Heart left ventricle (tissue), 16 donors: ENCODE measurements at regions of chr5 and their contacts with region 1.

Region 1: DNA sequence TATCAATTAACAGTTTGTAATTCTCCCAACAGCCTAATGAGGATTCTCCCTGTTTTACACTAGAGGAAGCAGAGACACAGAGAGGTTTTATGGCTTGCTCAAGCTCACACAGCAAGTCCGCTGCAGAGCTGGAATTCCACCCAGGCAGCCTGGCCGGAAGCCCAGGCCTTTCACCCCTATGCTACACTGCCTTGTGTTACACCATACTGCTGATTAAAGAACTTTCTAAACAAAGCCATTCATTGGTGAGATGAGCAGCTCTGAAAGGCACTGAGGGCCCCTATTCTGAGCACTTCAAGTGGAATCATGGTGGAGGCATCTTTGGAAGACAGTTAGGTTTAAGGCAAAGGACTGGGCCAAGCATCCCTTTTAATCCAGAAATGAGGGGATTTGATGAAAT is 14.7 kb upstream of the LARP1 start:
- DNase-seq: peak; percentile 43 to 79 (median 68)
- ATAC-seq: peak; percentile 52 to 93 (median 90)
- H3K4me3 ChIP-seq: no peak overlapping the region
- H3K27ac ChIP-seq: peak overlapping the region in 7 of 12 donors; percentile 9 to 68 (median 41)
- H3K4me1 ChIP-seq: peaks cover 0 to 15% (median 10%) of the 10 kb centered on the region in 12 donors
- H3K27me3 ChIP-seq: no peaks in the 10 kb centered on the region
- CTCF ChIP-seq: no peak
- POLR2A ChIP-seq: no peak

Region 2: GRCh38 chr5:154683101-154683880 is 57.2 kb before region 1 on chr5:
- intact Hi-C with region 1: loop called in 1 of 10 experiments (anchors 10 kb)
- DNase-seq: no peak
- ATAC-seq: no peak
- H3K4me3 ChIP-seq: peak overlapping the region; percentile 23 to 69 (median 54)
- H3K27ac ChIP-seq: peak overlapping the region; percentile 59 to 88 (median 84)
- H3K4me1 ChIP-seq: peaks cover 0 to 25% (median 7%) of the 10 kb centered on the region in 12 donors
- H3K27me3 ChIP-seq: no peaks in the 10 kb centered on the region
- CTCF ChIP-seq: no peak
- POLR2A ChIP-seq: no peak